ENCODE measurements at regions of chr12 and their contacts with region 1.

Region 1: DNA sequence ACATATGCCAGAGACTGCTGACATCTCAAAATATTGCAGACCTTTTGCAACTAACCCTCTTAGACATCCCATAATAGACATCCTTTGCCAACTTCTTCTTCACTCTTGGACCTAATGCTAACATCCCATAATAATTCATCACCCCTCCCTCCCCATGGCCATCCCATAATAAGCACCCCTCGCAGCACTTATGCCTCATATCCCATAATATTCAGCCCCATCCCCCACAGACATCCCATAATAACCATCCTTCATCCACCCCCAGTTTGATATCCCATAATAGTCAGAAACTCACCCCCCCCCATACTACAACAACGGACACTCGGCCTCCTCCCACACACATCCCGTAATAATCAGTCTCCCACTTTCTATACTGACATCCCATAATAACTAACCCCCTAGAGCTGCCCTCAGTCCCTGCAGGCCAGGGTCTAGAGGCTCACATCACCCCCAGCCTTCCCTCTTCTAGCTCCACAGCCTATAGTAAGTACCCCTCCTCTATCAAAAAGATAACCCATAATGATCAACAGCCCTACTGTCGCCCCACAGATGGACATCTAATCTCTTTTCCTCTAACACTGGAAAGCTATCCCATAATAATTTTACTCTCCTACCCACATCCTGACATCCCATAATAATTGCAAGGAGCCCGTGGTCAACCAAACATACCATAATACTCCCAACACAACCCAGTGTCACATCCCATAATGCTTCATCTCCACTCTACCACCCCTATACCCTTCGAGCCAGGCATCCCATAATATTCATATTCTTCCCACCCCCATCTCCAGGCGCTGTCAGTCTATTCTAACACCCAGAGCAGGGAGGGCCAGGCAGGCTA is 792 bp upstream of the CHD4 start:
- DNase-seq: peak in 3 of 5 donors; percentile 51 to 68 (median 56)
- ATAC-seq: peak; percentile 1 to 31 (median 2)
- H3K4me3 ChIP-seq: peak overlapping the region in 1 of 12 donors; percentile 3
- H3K27ac ChIP-seq: peak overlapping the region; percentile 22 to 99 (median 60)
- H3K4me1 ChIP-seq: peaks cover 5 to 61% (median 48%) of the 10 kb centered on the region in 12 donors
- H3K27me3 ChIP-seq: no peaks in the 10 kb centered on the region
- CTCF ChIP-seq: no peak
- POLR2A ChIP-seq: no peak

Region 2: DNA sequence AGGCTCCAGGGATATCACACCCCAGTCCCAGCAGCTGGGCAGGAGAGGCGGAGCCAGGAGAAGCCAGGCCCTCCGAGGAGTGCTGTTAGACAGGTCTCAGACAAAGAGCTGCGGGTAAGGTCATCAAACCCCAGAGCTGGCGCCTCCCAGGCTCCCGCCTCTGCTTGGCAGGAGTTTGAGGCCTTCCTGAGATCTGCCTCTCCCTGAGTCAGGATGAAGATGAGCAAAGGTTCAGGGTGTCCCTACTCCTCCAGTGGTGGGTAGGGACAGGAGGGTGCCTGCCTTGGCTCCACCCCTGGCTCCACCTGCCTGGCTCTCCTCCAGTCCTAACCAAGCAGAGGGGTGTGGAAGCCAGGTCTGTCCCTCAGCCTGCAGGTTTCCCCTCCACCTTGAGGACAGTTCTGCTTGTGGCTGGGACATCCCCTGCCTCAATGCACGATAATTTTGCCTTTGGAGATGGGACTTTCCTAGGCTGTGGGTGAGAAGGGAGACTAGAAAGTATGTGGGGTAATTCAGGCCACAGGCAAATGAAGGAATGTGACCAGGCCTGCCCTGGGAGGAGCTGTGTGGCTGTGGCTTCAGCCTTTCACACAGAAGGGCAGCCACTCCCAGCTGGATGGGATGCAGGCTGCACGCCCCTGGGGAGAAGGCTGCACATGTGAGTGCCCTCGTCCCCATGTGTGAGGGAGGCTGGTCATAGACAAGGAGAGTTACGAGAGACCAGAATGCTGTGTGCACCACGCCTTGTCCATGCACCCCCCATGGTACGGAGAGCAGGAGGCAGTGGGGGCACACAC is 295.2 kb before region 1 on chr12:
- intact Hi-C with region 1: no loop called
- DNase-seq: no peak
- ATAC-seq: peak in 1 of 4 donors; percentile 6
- H3K4me3 ChIP-seq: no peak overlapping the region
- H3K27ac ChIP-seq: no peak overlapping the region
- H3K4me1 ChIP-seq: peaks cover 0 to 17% (median 5%) of the 10 kb centered on the region in 12 donors
- H3K27me3 ChIP-seq: peaks cover 7 to 20% (median 14%) of the 10 kb centered on the region in 9 donors
- CTCF ChIP-seq: no peak
- POLR2A ChIP-seq: no peak

Region 3: DNA sequence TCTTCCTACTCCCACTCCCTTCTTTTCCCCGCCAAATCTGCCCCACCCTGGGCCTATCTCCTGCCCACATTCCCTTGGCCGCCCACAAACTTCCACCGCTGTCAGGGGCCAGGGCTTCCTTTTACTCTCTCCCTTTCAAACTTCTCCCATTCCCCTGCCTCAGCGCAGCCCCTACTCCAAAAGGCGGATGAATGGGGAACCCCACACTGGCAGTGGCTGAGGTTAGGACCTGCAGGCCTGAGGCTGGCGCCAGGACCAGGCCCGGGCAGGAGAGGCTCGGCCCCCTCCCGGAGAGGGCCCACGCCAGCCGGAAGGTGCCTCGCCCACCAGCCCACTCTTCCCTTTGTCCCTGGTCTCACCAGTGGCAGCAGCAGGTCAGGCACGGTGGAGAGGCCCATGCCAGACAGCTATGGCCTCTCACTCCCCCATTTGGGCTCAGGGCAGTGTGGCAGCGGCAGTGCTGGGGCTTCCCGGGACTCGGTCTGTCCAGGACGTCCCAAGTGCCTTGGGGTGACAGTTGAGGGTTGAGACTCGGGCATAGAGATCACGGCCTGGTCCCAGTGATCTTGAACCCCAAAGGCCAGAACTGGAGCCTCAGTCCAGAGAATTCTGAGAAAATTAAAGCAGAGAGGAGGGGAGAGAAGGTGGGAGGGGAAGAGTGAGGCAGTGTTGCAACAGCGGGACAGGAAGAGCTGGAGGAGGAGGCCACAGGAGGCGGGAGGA is 266.4 kb before region 1 on chr12 and contains the start of gene TNFRSF1A:
- intact Hi-C with region 1: no loop called
- DNase-seq: peak; percentile 82 to 87 (median 82)
- ATAC-seq: peak; percentile 68 to 84 (median 84)
- H3K4me3 ChIP-seq: peak within 1 kb of the TSS; percentile 69 to 100 (median 84)
- H3K27ac ChIP-seq: peak within 1 kb of the TSS; percentile 90 to 100 (median 98)
- H3K4me1 ChIP-seq: peaks cover 0 to 74% (median 62%) of the 10 kb centered on the region in 12 donors
- H3K27me3 ChIP-seq: no peaks in the 10 kb centered on the region
- CTCF ChIP-seq: no peak
- POLR2A ChIP-seq: peak in 1 of 2 donors; percentile 61
- total RNA-seq, gene TNFRSF1A: 37.2 to 141 (median 54.2) TPM

Region 4: GRCh38 chr12:6494258-6494743 is 113.7 kb before region 1 on chr12:
- intact Hi-C with region 1: no loop called
- DNase-seq: no peak
- ATAC-seq: no peak
- H3K4me3 ChIP-seq: peak overlapping the region; percentile 28 to 94 (median 82)
- H3K27ac ChIP-seq: peak overlapping the region in 9 of 12 donors; percentile 91 to 99 (median 97)
- H3K4me1 ChIP-seq: peaks cover 0 to 30% (median 20%) of the 10 kb centered on the region in 12 donors
- H3K27me3 ChIP-seq: no peaks in the 10 kb centered on the region
- CTCF ChIP-seq: no peak
- POLR2A ChIP-seq: no peak

Region 5: GRCh38 chr12:6563448-6564050 is 44.4 kb before region 1 on chr12:
- intact Hi-C with region 1: loop called in 5 of 10 experiments (anchors 2 to 5 kb)
- DNase-seq: peak in 4 of 5 donors; percentile 47 to 54 (median 48)
- ATAC-seq: no peak
- H3K4me3 ChIP-seq: no peak overlapping the region
- H3K27ac ChIP-seq: no peak overlapping the region
- H3K4me1 ChIP-seq: peaks cover 0 to 16% (median 11%) of the 10 kb centered on the region in 12 donors
- H3K27me3 ChIP-seq: no peaks in the 10 kb centered on the region
- CTCF ChIP-seq: peak; percentile 51 to 83 (median 74)
- POLR2A ChIP-seq: no peak

Region 6: GRCh38 chr12:6569312-6569711 is 38.7 kb before region 1 on chr12:
- intact Hi-C with region 1: loop called in 5 of 10 experiments (anchors 2 to 5 kb)
- DNase-seq: no peak
- ATAC-seq: no peak
- H3K4me3 ChIP-seq: peak overlapping the region in 1 of 12 donors; percentile 75
- H3K27ac ChIP-seq: peak overlapping the region in 1 of 12 donors; percentile 26
- H3K4me1 ChIP-seq: peaks cover 0 to 25% (median 14%) of the 10 kb centered on the region in 12 donors
- H3K27me3 ChIP-seq: no peaks in the 10 kb centered on the region
- CTCF ChIP-seq: no peak
- POLR2A ChIP-seq: no peak

Region 7: DNA sequence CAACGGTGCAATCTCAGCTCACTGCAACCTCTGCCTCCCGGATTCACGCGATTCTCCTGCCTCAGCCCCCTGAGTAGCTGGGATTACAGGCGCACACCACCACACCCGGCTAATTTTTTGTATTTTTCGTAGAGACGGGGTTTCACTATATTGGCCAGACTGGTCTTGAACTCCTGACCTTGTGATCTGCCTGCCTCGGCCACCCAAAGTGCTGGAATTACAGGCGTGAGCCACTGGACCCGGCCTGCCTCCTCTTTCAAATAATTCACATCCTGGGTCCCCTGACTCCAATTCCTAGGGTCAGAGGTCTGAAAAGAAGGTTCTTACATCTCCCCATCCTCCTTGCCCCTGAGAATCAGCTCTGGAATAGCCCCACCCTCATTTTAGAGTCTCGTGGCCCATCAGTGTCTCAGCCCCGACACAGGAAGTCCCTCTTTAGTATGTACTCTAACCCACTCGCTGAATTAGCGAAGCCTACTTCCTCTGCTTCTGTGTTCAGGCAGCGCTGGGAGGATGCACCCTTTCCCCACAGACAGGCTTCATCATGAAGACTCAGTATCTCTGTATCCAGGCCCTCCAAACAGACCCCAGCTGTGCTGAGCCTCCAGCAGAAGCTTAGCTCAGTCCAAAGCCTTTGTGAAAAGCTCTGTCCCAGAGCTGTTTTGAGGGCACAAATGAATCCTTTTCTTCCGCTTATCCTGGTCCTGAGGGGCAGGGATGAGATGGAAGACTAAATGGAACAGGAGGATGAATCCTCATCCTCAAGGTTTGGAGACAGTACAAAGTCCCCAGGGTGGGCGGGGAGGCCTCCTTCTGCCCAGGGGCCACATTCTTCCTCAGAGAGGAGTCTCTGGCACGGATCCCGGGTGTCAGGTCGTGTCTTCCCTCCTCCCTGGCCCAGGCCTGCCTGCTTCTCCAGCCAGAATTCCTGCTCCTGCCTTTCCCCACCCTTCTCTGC is 24.3 kb after region 1 on chr12:
- intact Hi-C with region 1: no loop called
- DNase-seq: peak in 2 of 5 donors; percentile 29 to 34
- ATAC-seq: peak; percentile 39 to 71 (median 47)
- H3K4me3 ChIP-seq: no peak overlapping the region
- H3K27ac ChIP-seq: peak overlapping the region in 10 of 12 donors; percentile 20 to 75 (median 52)
- H3K4me1 ChIP-seq: peaks cover 0 to 51% (median 2%) of the 10 kb centered on the region in 12 donors
- H3K27me3 ChIP-seq: peaks cover 0 to 3% (median 0%) of the 10 kb centered on the region in 9 donors
- CTCF ChIP-seq: no peak
- POLR2A ChIP-seq: no peak